Upper lobe of right lung (tissue), 1 donor: ENCODE measurements at regions of chr11 and their contacts with region 1.

Region 1: GRCh38 chr11:19561011-19561410 is 151.6 kb upstream of the NAV2 start:
- DNase-seq: no peak
- ATAC-seq: no peak
- H3K4me3 ChIP-seq: no peak overlapping the region
- H3K27ac ChIP-seq: no peak overlapping the region
- H3K4me1 ChIP-seq: peaks cover 4% of the 10 kb centered on the region
- H3K27me3 ChIP-seq: no peaks in the 10 kb centered on the region
- CTCF ChIP-seq: no peak

Region 2: GRCh38 chr11:19511413-19512183 is 49.4 kb before region 1 on chr11:
- intact Hi-C with region 1: no loop called
- DNase-seq: peak; percentile 66
- ATAC-seq: peak; percentile 37
- H3K4me3 ChIP-seq: no peak overlapping the region
- H3K27ac ChIP-seq: peak overlapping the region; percentile 42
- H3K4me1 ChIP-seq: no peaks in the 10 kb centered on the region
- H3K27me3 ChIP-seq: no peaks in the 10 kb centered on the region
- CTCF ChIP-seq: no peak

Region 3: DNA sequence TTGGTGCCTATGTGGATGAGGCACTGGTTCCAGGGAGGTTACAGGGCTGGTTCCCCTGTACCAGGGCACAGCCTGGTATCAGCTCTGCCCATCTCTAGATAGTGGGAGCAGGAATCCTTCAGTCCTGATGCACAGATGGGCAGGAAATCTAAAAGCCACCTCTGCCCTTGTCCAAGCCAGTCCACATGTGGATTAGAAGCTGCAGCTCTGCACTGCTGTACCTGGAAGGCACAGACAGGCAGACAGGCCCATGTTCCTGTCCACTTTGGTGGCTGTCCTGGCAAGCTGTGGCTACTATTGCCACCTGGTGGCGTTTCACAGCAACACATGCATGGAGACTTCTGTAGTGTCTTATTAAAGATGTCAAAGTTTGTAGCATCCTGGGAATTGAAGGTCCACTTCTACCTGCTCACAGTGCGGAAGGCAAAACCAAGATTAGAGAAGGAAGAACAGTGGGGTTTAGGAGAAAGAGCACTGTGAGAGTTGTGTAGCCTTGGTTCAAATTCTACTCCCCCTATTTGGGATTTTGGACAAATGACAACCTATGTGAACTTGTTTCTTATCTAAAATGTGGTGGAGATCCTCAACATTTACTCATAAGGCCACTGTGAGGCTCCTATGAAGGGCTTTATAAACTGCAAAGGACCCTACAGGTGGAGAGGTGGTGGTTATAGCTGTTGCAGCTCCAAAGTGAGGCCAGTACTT is 181.7 kb after region 1 on chr11:
- intact Hi-C with region 1: loop called (anchors 2 kb)
- DNase-seq: peak; percentile 83
- ATAC-seq: peak; percentile 97
- H3K4me3 ChIP-seq: no peak overlapping the region
- H3K27ac ChIP-seq: no peak overlapping the region
- H3K4me1 ChIP-seq: peaks cover 8% of the 10 kb centered on the region
- H3K27me3 ChIP-seq: no peaks in the 10 kb centered on the region
- CTCF ChIP-seq: peak; percentile 92

Region 4: GRCh38 chr11:19903620-19904069 is 342.6 kb after region 1 on chr11:
- intact Hi-C with region 1: loop called (anchors 10 kb)
- DNase-seq: no peak
- ATAC-seq: peak; percentile 84
- H3K4me3 ChIP-seq: no peak overlapping the region
- H3K27ac ChIP-seq: no peak overlapping the region
- H3K4me1 ChIP-seq: no peaks in the 10 kb centered on the region
- H3K27me3 ChIP-seq: no peaks in the 10 kb centered on the region
- CTCF ChIP-seq: peak; percentile 72